WTC11 (cell line): ENCODE measurements at regions of chr7 and their contacts with region 1.

Region 1: DNA sequence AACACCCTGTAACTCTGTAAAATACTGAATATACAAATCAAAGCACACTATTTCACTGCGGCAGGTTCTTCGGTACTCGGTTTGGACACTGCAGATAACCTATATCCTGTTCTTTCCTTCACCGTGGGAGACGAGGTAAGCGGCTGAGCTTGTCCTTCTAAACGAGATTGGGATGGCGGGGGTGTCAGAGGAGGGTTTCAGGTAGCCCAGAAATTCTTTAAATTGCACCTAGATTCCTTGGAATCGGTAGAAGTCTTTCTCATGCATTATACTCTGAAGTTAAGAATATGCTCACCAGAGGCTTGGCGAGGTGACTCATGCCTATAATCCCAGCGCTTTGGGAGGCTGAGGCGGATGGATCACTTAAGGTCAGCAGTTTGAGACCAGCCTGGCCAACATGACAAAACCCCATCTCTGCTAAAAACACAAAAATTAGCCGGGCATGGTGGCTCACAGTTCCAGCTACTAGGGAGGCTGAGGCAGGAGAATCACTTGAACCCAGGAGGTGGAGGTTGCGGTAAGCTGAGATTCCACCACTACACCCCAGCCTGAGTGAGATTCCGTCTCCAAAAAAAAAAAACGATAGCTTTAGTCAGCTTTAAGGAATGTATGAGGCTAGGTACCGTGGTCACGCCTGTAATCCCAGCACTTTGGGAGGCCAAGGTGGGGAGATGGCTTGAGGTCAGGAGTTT is 10.1 kb upstream of the LAT2 start:
- DNase-seq: no peak
- ATAC-seq: peak; percentile 25; the same call in 1 of the 2 replicates
- H3K4me3 Mint-ChIP-seq: no peak overlapping the region
- H3K27ac Mint-ChIP-seq: peak overlapping the region; percentile 81
- H3K4me1 Mint-ChIP-seq: no peaks in the 10 kb centered on the region
- H3K27me3 Mint-ChIP-seq: no peaks in the 10 kb centered on the region
- CTCF ChIP-seq: no peak

Region 2: GRCh38 chr7:74183613-74184450 is 15.9 kb before region 1 on chr7:
- CTCF ChIA-PET with region 1: interaction called, 12 read pairs
- POLR2A ChIA-PET with region 1: interaction called, 4 read pairs
- DNase-seq: peak; percentile 35
- ATAC-seq: peak; percentile 75
- H3K4me3 Mint-ChIP-seq: no peak overlapping the region
- H3K27ac Mint-ChIP-seq: peak overlapping the region; percentile 47
- H3K4me1 Mint-ChIP-seq: peaks cover 49% of the 10 kb centered on the region
- H3K27me3 Mint-ChIP-seq: no peaks in the 10 kb centered on the region
- CTCF ChIP-seq: no peak

Region 3: GRCh38 chr7:74334030-74334429 is 134.3 kb after region 1 on chr7:
- CTCF ChIA-PET with region 1: interaction called, 4 read pairs
- POLR2A ChIA-PET with region 1: interaction called, 11 read pairs
- DNase-seq: no peak
- ATAC-seq: no peak
- H3K4me3 Mint-ChIP-seq: no peak overlapping the region
- H3K27ac Mint-ChIP-seq: peak overlapping the region; percentile 74; the same call in 1 of the 2 replicates
- H3K4me1 Mint-ChIP-seq: no peaks in the 10 kb centered on the region
- H3K27me3 Mint-ChIP-seq: no peaks in the 10 kb centered on the region
- CTCF ChIP-seq: no peak